ENCODE measurements at regions of chr9 and their contacts with region 1.

Region 1: GRCh38 chr9:6681147-6681956 is 35.8 kb upstream of the GLDC start:
- DNase-seq: peak; percentile 95
- H3K4me3 Mint-ChIP-seq: peak overlapping the region; percentile 94
- H3K27ac Mint-ChIP-seq: peak overlapping the region; percentile 99
- H3K4me1 Mint-ChIP-seq: peaks cover 22% of the 10 kb centered on the region
- H3K27me3 Mint-ChIP-seq: no peaks in the 10 kb centered on the region

Region 2: DNA sequence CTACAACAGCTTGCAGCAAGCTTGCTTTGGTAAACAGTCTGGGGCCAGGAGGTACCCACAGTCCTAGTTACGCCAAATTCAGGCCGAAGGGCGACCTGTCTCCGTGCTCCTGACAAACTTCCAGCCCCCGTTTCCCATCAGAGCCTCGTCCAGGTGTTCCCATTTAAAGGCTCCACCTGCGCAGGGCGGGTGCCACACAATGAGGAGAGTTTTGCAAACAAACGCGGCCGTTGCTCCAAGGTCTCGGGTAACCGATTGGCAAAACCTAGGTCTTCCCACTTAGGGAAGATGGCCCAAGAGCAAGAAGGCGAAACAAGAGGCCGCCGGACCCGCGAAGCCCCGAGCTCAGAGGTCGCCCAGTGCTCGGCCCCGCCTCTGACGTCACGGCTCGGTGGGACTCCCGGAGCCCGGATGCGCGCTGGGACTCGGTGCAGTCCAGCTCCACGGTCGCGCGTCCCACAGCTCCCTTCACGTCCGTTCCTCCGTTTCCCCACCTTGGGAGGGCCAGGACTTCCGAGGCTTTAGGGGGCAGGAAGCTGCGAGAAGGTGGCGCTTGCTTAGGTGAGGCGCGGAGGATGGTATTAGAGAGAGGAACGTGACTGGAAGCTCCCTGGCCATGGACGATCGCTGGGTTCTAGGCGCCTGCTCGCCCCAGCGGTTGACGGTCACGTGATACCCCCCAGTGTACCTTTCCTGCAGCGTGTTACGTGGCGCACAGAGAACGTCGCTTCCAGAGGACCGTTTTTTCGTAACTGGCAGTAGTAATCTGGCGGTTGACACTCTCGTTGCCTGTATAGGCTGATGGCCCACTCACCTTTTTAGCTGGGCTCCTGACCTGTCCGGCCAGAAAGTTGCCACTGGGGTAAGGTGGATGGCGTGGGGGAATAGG is 34.6 kb after region 1 on chr9:
- CTCF ChIA-PET with region 1: interaction called, 5 read pairs
- POLR2A ChIA-PET with region 1: interaction called, 29 read pairs
- DNase-seq: peak; percentile 81
- H3K4me3 Mint-ChIP-seq: peak overlapping the region; percentile 85
- H3K27ac Mint-ChIP-seq: peak overlapping the region; percentile 79
- H3K4me1 Mint-ChIP-seq: peaks cover 13% of the 10 kb centered on the region
- H3K27me3 Mint-ChIP-seq: peaks cover 3% of the 10 kb centered on the region